Left cardiac atrium (tissue), 4 donors: ENCODE measurements at regions of chr14 and their contacts with region 1.

Region 1: GRCh38 chr14:31992011-31992447 is 85.1 kb upstream of the ARHGAP5 start:
- DNase-seq: no peak
- ATAC-seq: peak in 1 of 2 donors; percentile 19

Region 2: DNA sequence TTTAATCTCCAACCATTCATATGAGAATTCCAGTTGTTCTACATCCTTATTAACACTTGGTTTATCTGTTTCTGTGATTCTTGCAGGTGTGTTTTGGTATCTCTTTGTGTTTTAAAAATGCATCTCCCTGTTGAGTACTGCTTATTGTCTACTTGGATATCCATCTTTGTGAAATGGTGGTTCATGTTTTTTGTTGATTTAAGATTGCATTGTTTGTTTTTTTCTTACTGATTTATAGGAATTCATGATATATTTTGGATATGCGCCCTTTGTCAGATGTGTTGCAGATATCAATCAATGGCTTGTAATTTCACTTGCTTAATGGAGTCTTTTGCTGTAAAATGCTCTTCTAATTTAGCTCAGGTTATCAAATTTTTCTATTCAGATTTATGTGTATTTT is 255.2 kb before region 1 on chr14:
- intact Hi-C with region 1: no loop called
- DNase-seq: no peak
- ATAC-seq: no peak

Region 3: GRCh38 chr14:31920989-31921650 is 70.9 kb before region 1 on chr14:
- intact Hi-C with region 1: no loop called
- DNase-seq: no peak
- ATAC-seq: no peak

Region 4: GRCh38 chr14:31937721-31938346 is 54.2 kb before region 1 on chr14:
- intact Hi-C with region 1: loop called in 1 of 2 experiments (anchors 5 kb)
- DNase-seq: peak; percentile 69
- ATAC-seq: peak in 1 of 2 donors; percentile 94